Gastrocnemius medialis (tissue), 4 donors: ENCODE measurements at regions of chr19 and their contacts with region 1.

Region 1: GRCh38 chr19:6372594-6373095 is at the start of gene ALKBH7:
- DNase-seq: peak; percentile 100
- ATAC-seq: peak; percentile 92 to 93
- H3K4me3 ChIP-seq: peak within 1 kb of the TSS; percentile 86 to 99 (median 94)
- H3K27ac ChIP-seq: peak within 1 kb of the TSS; percentile 98 to 100 (median 100)
- H3K4me1 ChIP-seq: peaks cover 0 to 10% of the 10 kb centered on the region in 2 donors
- H3K27me3 ChIP-seq: no peaks in the 10 kb centered on the region
- CTCF ChIP-seq: peak in 1 of 5 experiments; percentile 5
- POLR2A ChIP-seq: peak; percentile 55 to 65
- total RNA-seq, gene ALKBH7: 42.2 to 112 (median 90.4) TPM

Region 2: GRCh38 chr19:5622463-5623396 is 749.9 kb before region 1 on chr19 and contains the starts of genes SAFB and SAFB2:
- in situ Hi-C with region 1: no loop called
- intact Hi-C with region 1: loop called (anchors 10 kb)
- DNase-seq: peak; percentile 98 to 100
- ATAC-seq: peak; percentile 86 to 91
- H3K4me3 ChIP-seq: peak within 1 kb of the TSS; percentile 79 to 95 (median 82)
- H3K27ac ChIP-seq: peak within 1 kb of the TSS; percentile 96 to 98 (median 98)
- H3K4me1 ChIP-seq: peaks cover 60 to 64% of the 10 kb centered on the region in 2 donors
- H3K27me3 ChIP-seq: no peaks in the 10 kb centered on the region
- CTCF ChIP-seq: no peak
- POLR2A ChIP-seq: peak; percentile 98 to 99
- total RNA-seq, gene SAFB: 29.8 to 60.0 (median 56.1) TPM
- total RNA-seq, gene SAFB2: 13.7 to 19.8 (median 18.4) TPM

Region 3: GRCh38 chr19:5977785-5978605 is 394.6 kb before region 1 on chr19 and contains the start of gene RANBP3:
- in situ Hi-C with region 1: no loop called
- intact Hi-C with region 1: loop called (anchors 1 kb)
- DNase-seq: peak; percentile 97 to 99
- ATAC-seq: peak; percentile 95 to 96
- H3K4me3 ChIP-seq: peak within 1 kb of the TSS; percentile 73 to 100 (median 88)
- H3K27ac ChIP-seq: peak within 1 kb of the TSS; percentile 84 to 93 (median 90)
- H3K4me1 ChIP-seq: peaks cover 29 to 40% of the 10 kb centered on the region in 2 donors
- H3K27me3 ChIP-seq: no peaks in the 10 kb centered on the region
- CTCF ChIP-seq: no peak
- POLR2A ChIP-seq: peak; percentile 49 to 63
- total RNA-seq, gene RANBP3: 37.4 to 74.3 (median 61.3) TPM

Region 4: GRCh38 chr19:6279931-6280591 is 92.6 kb before region 1 on chr19 and contains the start of gene MLLT1:
- in situ Hi-C with region 1: no loop called
- intact Hi-C with region 1: loop called (anchors 5 kb)
- DNase-seq: peak; percentile 97
- ATAC-seq: peak; percentile 94
- H3K4me3 ChIP-seq: peak within 1 kb of the TSS; percentile 70 to 92 (median 83)
- H3K27ac ChIP-seq: peak within 1 kb of the TSS; percentile 85 to 91 (median 88)
- H3K4me1 ChIP-seq: peaks cover 31 to 36% of the 10 kb centered on the region in 2 donors
- H3K27me3 ChIP-seq: no peaks in the 10 kb centered on the region
- CTCF ChIP-seq: peak in 4 of 5 experiments; percentile 68 to 97 (median 80)
- POLR2A ChIP-seq: peak; percentile 76 to 81
- total RNA-seq, gene MLLT1: 13.9 to 37.7 (median 24.4) TPM

Region 5: DNA sequence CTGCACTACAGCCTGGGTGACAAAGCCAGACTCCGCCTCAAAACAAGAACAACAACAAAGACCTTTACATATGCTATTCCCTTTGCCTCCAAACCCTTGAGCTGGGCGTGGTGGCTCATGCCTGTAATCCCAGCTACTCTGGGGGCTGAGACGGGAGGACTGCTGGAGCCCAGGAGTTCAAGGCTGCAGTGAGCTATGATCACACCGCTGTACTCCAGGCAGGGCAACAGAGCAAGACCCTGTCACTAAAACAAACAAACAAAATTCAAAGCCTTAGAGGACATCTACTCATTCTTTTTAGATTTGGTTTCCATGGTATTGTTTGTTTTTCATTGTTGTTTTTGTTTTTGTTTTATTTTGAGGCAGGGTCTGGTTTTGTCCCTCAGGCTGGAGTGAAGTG is 47.0 kb before region 1 on chr19:
- in situ Hi-C with region 1: no loop called
- intact Hi-C with region 1: no loop called
- DNase-seq: no peak
- ATAC-seq: no peak
- H3K4me3 ChIP-seq: no peak overlapping the region
- H3K27ac ChIP-seq: no peak overlapping the region
- H3K4me1 ChIP-seq: no peaks in the 10 kb centered on the region
- H3K27me3 ChIP-seq: peaks cover 0 to 5% (median 5%) of the 10 kb centered on the region in 3 donors
- CTCF ChIP-seq: no peak
- POLR2A ChIP-seq: no peak

Region 6: GRCh38 chr19:6393074-6393983 is 20.7 kb after region 1 on chr19 and contains the start of gene GTF2F1:
- in situ Hi-C with region 1: no loop called
- intact Hi-C with region 1: loop called (anchors 1 kb)
- DNase-seq: peak; percentile 80 to 83
- ATAC-seq: peak; percentile 97
- H3K4me3 ChIP-seq: peak within 1 kb of the TSS; percentile 68 to 97 (median 90)
- H3K27ac ChIP-seq: peak within 1 kb of the TSS; percentile 83 to 93 (median 88)
- H3K4me1 ChIP-seq: peaks cover 6 to 15% of the 10 kb centered on the region in 2 donors
- H3K27me3 ChIP-seq: no peaks in the 10 kb centered on the region
- CTCF ChIP-seq: peak in 1 of 5 experiments; percentile 8
- POLR2A ChIP-seq: peak in 1 of 2 donors; percentile 18
- total RNA-seq, gene GTF2F1: 11.4 to 34.8 (median 22.4) TPM

Region 7: DNA sequence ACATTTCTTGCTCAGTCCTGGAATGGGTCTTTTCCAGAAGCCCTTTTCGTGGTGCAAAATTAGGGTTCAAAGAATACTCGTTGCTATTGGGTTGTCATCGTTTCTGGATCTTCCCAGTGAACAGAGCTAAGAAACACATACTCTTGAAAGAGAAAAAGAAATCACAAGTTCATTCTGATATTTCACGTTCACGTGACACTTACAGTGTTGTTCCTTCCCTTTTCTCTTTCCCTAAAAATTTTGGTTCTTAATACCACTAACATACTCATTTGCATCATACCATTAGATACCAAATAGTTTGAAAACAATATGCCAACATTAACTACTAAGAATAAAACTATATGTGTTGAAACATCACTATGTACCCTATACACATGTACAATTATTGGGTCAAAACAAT is 33.8 kb after region 1 on chr19:
- in situ Hi-C with region 1: no loop called
- intact Hi-C with region 1: no loop called
- DNase-seq: no peak
- ATAC-seq: no peak
- H3K4me3 ChIP-seq: no peak overlapping the region
- H3K27ac ChIP-seq: no peak overlapping the region
- H3K4me1 ChIP-seq: no peaks in the 10 kb centered on the region
- H3K27me3 ChIP-seq: no peaks in the 10 kb centered on the region
- CTCF ChIP-seq: no peak
- POLR2A ChIP-seq: no peak